ENCODE measurements at regions of chr20 and their contacts with region 1.

Region 1: DNA sequence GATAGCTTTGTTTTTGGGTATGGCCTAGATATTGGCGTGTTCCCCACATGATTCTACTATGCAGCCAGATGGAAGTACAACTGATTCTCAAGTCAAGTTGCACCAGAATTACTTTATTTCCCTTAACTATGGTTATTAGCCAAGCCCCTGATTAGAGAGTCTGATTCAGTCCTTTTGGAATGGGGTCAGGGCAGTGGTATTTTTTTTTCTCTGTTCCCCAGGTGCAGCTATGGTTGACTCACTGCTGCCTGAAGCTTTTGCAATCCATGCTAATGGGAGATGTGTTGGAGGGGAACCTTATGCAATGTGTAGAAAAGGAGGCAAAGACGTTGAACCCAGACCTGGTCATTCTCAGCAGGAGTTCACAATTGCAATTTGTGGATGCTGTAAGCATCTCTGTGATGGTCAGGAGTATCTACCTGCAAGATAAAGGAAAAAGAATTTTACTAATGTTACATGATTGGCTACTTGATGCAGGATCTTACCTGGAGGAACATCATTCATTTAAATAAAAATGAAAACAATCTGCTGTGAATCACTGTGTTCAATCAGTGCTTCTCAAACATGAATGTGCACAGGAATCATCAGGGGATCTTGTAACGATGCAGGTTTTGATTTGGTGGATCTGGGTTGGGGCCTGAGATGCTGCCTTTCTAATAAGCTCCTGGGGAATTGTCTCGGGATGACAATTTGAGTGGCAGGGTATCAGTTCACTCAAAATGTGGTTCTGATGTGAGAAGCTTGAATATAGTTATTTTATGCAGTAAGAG is 49.4 kb downstream of the PFDN4 start:
- DNase-seq: peak; percentile 89
- H3K4me3 ChIP-seq: no peak overlapping the region
- CTCF ChIP-seq: no peak

Region 2: DNA sequence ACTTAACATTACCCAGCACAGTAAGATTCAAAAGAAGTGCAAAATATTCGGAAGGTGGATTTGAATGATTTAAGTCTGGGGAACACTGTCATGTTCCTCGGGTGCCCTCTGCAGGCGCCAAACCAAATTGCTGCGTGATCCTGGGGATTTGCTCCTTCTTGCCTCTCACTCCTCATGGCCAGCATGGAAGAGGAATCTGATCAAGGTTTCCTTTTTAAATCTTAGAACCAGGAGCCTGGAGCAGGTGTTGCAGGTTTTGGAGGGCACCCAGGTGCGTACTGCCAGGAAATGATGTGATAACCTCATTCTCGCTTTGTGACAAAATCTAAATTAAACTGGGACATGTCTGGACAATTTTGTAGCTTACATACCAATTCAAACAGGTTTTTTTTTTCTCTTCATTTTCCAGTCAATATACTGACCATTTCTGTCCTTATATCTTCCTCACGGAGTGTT is 57.5 kb before region 1 on chr20:
- in situ Hi-C with region 1: no loop called
- DNase-seq: peak; percentile 61
- H3K4me3 ChIP-seq: no peak overlapping the region
- CTCF ChIP-seq: peak; percentile 92

Region 3: DNA sequence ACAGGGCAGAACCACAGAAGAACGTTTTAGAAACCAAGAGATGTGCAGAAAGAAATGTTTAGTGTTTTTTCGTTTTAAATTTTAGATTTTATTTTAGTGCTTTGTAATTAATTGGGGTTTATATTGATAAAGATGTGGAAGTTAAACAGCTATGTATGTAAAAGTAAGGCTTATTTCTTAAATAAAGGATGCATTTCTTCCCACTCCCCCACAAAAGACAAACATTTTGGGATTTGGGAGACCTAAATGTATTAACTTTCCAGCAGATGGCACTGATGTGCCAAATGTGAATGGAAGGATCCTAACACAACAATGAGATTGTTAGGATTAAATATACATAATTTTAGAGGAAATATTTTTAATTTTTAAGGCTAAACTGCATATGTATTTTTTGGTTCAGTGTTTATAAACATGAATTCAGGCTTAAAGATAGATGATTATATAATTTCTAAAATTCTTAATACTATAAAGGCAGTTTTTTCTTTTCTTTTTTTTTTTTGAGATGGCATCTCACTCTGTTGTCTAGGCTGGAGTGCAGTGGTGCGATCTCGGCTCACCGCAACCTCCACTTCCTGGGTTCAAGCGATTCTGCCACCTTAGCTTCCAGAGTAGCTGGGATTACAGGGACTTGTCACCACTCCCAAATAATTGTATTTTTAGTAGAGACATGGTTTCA is 37.4 kb before region 1 on chr20:
- in situ Hi-C with region 1: loop called (anchors 5 kb)
- DNase-seq: peak; percentile 38
- H3K4me3 ChIP-seq: no peak overlapping the region
- CTCF ChIP-seq: peak; percentile 57